ENCODE measurements at regions of chr22 and their contacts with region 1.

Region 1: DNA sequence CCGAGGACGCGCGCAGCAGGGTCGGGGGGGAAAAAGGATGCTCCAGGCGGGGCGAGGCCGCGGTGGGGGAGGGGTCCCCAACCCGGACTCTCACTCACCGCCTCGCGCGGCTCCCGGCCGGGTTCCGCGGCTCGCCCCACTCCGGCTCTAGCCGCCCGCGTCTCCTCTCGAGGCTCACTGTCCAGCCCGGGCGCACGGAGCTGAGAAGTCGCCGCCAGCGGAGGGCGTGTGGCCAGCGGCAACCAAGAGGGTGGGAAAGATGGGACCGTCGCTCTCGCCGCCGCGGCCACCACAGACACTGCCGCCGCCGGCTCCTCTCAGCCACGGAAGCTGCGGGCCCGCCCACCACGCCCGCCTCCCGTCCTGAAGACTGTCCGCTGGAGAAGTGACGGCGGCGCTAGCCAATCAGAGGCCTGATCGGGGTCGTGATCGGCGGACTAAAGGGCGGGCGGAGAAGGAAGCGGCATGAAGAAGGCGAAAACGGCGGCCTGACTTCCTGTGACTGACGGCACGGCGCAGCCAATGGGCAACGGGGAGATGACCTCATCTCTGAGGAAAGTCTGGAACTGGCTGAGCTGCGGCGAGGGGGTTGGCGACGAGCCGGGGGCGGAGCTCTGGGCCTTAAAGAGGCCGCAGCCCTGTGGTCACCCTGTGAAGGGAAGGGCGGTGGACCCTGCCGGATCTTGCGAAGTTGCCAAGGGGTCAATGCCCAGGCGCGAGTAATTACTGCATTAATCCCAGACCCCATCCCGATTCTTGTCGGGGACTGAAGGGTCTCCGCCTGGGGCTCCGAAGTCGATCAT is at the start of gene MRTFA:
- DNase-seq: peak; percentile 100
- H3K4me3 Mint-ChIP-seq: peak within 1 kb of the TSS; percentile 94
- H3K27ac Mint-ChIP-seq: peak within 1 kb of the TSS; percentile 94
- H3K4me1 Mint-ChIP-seq: peaks cover 27% of the 10 kb centered on the region
- H3K27me3 Mint-ChIP-seq: no peaks in the 10 kb centered on the region
- total RNA-seq, gene MRTFA: 47.4 and 47.8 TPM in 2 replicates

Region 2: DNA sequence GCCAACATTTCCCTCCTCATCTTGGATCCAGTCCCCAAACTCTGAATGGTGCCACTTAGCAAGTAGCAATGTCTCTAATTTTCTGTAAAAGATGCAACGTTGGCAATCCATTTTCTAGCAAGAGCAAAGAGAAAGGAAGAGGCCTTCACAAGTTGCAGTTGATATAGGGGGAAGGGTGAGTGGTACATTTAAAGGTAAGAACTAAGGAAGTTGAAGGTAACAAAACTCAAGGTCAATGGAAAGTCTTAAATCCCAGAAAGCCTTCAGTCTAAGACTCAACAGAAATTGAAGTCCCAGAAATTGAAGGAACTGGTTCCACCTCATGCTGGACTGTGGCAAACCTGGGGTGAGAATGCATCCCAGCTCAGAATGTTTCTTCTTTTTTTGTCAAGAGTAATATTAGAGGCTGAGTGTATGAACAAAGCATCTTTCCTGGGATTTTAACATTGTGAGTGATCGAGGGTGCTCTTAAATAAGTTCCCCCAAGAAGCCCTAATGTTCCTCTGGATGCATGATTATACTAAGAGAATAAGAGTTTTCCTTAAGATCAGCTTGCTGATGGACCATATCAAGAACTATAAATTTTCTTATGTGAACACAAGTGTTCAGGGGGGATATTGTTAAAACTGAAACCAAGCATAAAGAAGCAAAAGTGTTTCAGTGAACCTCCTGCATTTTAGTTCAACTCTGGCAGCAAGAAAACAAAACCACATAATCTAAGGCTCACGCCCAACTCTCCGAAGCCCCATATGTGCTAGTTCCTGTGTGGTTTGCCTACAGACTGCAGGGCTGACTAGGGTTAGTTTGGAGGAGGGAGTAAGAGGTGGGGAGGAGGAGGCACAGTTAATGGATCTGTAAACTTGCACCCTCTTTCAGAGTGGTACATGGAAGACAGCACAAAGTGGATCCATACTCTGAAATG is 736.0 kb before region 1 on chr22 and contains the start of gene GRAP2:
- intact Hi-C with region 1: loop called (anchors 10 kb)
- DNase-seq: peak; percentile 77
- H3K4me3 Mint-ChIP-seq: peak within 1 kb of the TSS; percentile 93
- H3K27ac Mint-ChIP-seq: peak within 1 kb of the TSS; percentile 95
- H3K4me1 Mint-ChIP-seq: peaks cover 47% of the 10 kb centered on the region
- H3K27me3 Mint-ChIP-seq: no peaks in the 10 kb centered on the region
- total RNA-seq, gene GRAP2: 30.5 and 31.3 TPM in 2 replicates

Region 3: DNA sequence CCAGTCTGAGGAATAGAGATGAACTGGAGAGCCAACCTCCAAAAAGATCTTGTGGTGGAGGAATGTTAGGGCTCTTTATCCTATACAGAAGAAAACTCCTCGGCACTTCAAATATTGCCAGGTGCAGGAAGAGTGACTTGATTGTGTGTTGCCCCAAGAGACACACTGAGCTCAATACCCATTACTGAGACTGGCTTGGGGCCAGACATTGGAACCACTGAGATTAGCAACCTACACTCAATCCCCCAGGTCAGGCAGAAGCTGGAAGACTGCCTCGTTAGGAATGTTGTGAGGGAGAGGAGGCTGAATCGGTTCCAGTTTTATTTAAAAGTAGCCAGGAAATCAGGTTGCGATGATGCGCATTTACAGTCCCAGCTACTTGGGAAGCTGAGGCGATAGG is 268.6 kb before region 1 on chr22:
- intact Hi-C with region 1: loop called (anchors 2 kb)
- DNase-seq: no peak
- H3K4me3 Mint-ChIP-seq: no peak overlapping the region
- H3K27ac Mint-ChIP-seq: no peak overlapping the region
- H3K4me1 Mint-ChIP-seq: peaks cover 16% of the 10 kb centered on the region
- H3K27me3 Mint-ChIP-seq: no peaks in the 10 kb centered on the region

Region 4: GRCh38 chr22:40533712-40534378 is 102.7 kb before region 1 on chr22:
- intact Hi-C with region 1: loop called (anchors 2 kb)
- DNase-seq: peak; percentile 53
- H3K4me3 Mint-ChIP-seq: peak overlapping the region; percentile 84
- H3K27ac Mint-ChIP-seq: peak overlapping the region; percentile 82
- H3K4me1 Mint-ChIP-seq: peaks cover 62% of the 10 kb centered on the region
- H3K27me3 Mint-ChIP-seq: no peaks in the 10 kb centered on the region

Region 5: GRCh38 chr22:40603088-40603605 is 33.4 kb before region 1 on chr22:
- intact Hi-C with region 1: no loop called
- DNase-seq: no peak
- H3K4me3 Mint-ChIP-seq: no peak overlapping the region
- H3K27ac Mint-ChIP-seq: no peak overlapping the region
- H3K4me1 Mint-ChIP-seq: peaks cover 28% of the 10 kb centered on the region
- H3K27me3 Mint-ChIP-seq: no peaks in the 10 kb centered on the region

Region 6: GRCh38 chr22:40651563-40652501 is 15.3 kb after region 1 on chr22:
- intact Hi-C with region 1: loop called (anchors 1 kb)
- DNase-seq: peak; percentile 71
- H3K4me3 Mint-ChIP-seq: peak overlapping the region; percentile 72
- H3K27ac Mint-ChIP-seq: peak overlapping the region; percentile 91
- H3K4me1 Mint-ChIP-seq: peaks cover 32% of the 10 kb centered on the region
- H3K27me3 Mint-ChIP-seq: no peaks in the 10 kb centered on the region

Region 7: GRCh38 chr22:40818747-40819598 is 182.4 kb after region 1 on chr22 and contains the start of gene SLC25A17:
- intact Hi-C with region 1: loop called (anchors 2 kb)
- DNase-seq: peak; percentile 82
- H3K4me3 Mint-ChIP-seq: peak within 1 kb of the TSS; percentile 87
- H3K27ac Mint-ChIP-seq: peak within 1 kb of the TSS; percentile 93
- H3K4me1 Mint-ChIP-seq: peaks cover 33% of the 10 kb centered on the region
- H3K27me3 Mint-ChIP-seq: no peaks in the 10 kb centered on the region
- total RNA-seq, gene SLC25A17: 29.4 and 34.0 TPM in 2 replicates

Region 8: GRCh38 chr22:40950962-40951794 is 314.6 kb after region 1 on chr22 and contains the start of gene RBX1:
- intact Hi-C with region 1: loop called (anchors 5 kb)
- DNase-seq: peak; percentile 98
- H3K4me3 Mint-ChIP-seq: peak within 1 kb of the TSS; percentile 98
- H3K27ac Mint-ChIP-seq: peak within 1 kb of the TSS; percentile 98
- H3K4me1 Mint-ChIP-seq: peaks cover 33% of the 10 kb centered on the region
- H3K27me3 Mint-ChIP-seq: no peaks in the 10 kb centered on the region
- total RNA-seq, gene RBX1: 90.9 and 94.4 TPM in 2 replicates